ENCODE measurements at regions of chr2 and their contacts with region 1.

Region 1: GRCh38 chr2:230902180-230902899 is 22.7 kb downstream of the GPR55 start:
- DNase-seq: peak in 2 of 5 donors; percentile 52 to 58
- ATAC-seq: peak in 3 of 4 donors; percentile 54 to 70 (median 64)
- H3K4me3 ChIP-seq: no peak overlapping the region
- H3K27ac ChIP-seq: no peak overlapping the region
- H3K4me1 ChIP-seq: peaks cover 0 to 8% (median 0%) of the 10 kb centered on the region in 12 donors
- H3K27me3 ChIP-seq: peaks cover 0 to 12% (median 0%) of the 10 kb centered on the region in 9 donors
- CTCF ChIP-seq: peak; percentile 32 to 92 (median 70)
- POLR2A ChIP-seq: no peak

Region 2: GRCh38 chr2:230987137-230988020 is 85.0 kb after region 1 on chr2:
- intact Hi-C with region 1: loop called in 9 of 10 experiments (anchors 1 to 10 kb)
- DNase-seq: peak; percentile 72 to 90 (median 77)
- ATAC-seq: peak; percentile 64 to 94 (median 84)
- H3K4me3 ChIP-seq: peak overlapping the region in 11 of 12 donors; percentile 10 to 48 (median 39)
- H3K27ac ChIP-seq: no peak overlapping the region
- H3K4me1 ChIP-seq: peaks cover 0 to 5% (median 4%) of the 10 kb centered on the region in 12 donors
- H3K27me3 ChIP-seq: peaks cover 7 to 39% (median 27%) of the 10 kb centered on the region in 9 donors
- CTCF ChIP-seq: peak; percentile 89 to 97 (median 95)
- POLR2A ChIP-seq: no peak

Region 3: DNA sequence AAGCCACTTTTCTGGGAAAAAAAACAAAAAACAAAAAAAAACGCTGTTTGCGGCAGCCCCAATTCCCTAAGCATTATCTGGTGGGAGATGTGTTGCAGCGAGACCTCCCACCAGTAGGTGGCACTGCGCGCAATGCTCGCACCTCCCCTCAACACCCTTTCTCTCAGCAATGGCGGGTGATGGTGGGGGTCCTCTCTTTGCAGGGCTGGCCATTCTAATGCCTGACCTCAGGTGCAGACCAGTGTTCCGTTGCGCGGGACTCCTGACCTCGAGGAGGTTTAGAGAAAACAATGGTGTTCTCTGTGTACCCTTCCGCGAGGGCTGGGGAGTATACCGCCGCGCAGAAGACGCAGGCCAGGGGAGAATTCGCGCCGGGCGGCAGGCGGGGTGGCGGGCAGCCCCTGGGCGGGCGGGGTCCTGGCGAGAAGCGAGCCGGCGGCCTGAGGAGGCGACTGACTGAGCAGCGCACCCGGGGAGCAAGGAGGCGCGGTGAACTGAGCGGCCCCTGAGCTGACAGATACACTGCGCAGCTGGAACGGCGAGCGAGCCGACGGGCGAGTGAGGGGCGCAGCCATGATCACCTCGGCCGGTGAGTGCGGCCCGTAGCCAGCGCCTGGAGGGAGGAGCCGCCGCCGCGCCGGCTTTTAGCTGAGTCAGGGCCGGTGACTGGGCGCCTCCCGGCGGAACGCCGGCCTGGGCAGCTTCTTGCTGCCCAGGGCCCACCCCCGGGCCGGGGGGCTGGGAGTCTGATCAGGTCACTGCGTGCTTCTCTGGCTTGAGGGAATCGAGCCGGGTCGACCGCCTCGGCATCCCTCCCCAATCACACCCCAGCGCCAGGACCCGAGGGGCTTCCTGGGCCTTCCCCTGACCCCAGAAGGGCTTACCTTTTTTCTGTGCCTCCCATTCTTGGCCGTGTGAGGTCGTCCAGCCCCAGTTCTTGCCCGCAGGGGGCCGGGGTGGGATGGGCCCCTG is 154.4 kb after region 1 on chr2 and contains the start of gene PSMD1:
- intact Hi-C with region 1: loop called in 1 of 10 experiments (anchors 10 kb)
- DNase-seq: peak; percentile 92 to 95 (median 93)
- ATAC-seq: peak; percentile 85 to 92 (median 90)
- H3K4me3 ChIP-seq: peak within 1 kb of the TSS; percentile 71 to 100 (median 91)
- H3K27ac ChIP-seq: peak within 1 kb of the TSS; percentile 90 to 99 (median 93)
- H3K4me1 ChIP-seq: peaks cover 0 to 42% (median 32%) of the 10 kb centered on the region in 12 donors
- H3K27me3 ChIP-seq: no peaks in the 10 kb centered on the region
- CTCF ChIP-seq: peak; percentile 91 to 99 (median 97)
- POLR2A ChIP-seq: peak in 1 of 2 donors; percentile 42
- total RNA-seq, gene PSMD1: 66.1 to 124 (median 93.7) TPM